Caco-2 (cell line): ENCODE measurements at regions of chr10 and their contacts with region 1.

Region 1: GRCh38 chr10:76547352-76547972 is 1090.1 kb downstream of the KCNMA1 start:
- DNase-seq: peak; percentile 78 to 87
- H3K4me3 ChIP-seq: no peak overlapping the region
- H3K4me3 Mint-ChIP-seq: no peak overlapping the region
- H3K27ac Mint-ChIP-seq: no peak overlapping the region
- H3K4me1 ChIP-seq: peaks cover 7% of the 10 kb centered on the region
- H3K4me1 Mint-ChIP-seq: peaks cover 7% of the 10 kb centered on the region
- H3K27me3 ChIP-seq: no peaks in the 10 kb centered on the region
- H3K27me3 Mint-ChIP-seq: no peaks in the 10 kb centered on the region
- CTCF ChIP-seq: peak; percentile 81 to 85

Region 2: DNA sequence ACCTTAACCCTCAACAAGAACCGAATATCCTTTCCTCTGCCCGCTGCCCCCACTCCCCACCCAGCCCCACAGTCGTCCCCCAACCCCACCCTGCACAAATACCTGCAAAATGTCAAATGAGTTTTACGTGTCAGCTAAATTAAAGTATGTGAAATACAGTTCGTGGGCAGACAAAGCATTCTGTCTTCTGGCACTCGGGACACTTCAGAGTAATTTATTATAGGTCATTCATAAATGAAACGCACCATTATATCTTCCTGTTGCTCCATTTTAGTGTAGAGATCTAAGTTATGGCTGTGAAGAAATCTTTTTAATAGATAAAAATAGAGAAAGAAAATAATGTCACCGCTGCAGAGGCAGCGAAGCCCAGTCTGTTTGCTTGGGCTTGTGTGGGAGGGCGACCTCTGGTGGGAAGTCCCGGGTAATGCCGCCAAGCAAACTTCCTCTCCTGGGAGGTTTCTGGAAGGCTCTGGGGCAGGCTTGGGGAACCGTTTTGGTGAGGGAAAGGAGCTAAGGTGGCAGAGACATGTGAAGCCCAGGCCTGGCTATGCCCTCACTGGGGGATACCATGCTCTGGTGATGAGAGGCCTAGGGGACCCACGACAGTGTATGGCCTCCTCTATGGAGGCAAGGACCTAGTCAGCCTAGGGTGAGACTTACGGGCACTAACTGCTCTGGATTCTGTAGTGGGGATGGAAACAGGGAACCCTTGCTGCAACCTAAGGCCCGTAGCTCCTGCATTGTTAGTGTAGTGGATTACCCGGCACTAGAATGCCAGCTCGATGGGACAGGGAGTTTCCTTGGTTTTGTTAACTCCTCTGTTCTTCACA is 511.1 kb before region 1 on chr10:
- CTCF ChIA-PET with region 1: no interaction called
- POLR2A ChIA-PET with region 1: no interaction called
- intact Hi-C with region 1: loop called (anchors 10 kb)
- DNase-seq: peak; percentile 56 to 66
- H3K4me3 ChIP-seq: no peak overlapping the region
- H3K4me3 Mint-ChIP-seq: no peak overlapping the region
- H3K27ac Mint-ChIP-seq: no peak overlapping the region
- H3K4me1 ChIP-seq: peaks cover 14% of the 10 kb centered on the region
- H3K4me1 Mint-ChIP-seq: peaks cover 21% of the 10 kb centered on the region
- H3K27me3 ChIP-seq: no peaks in the 10 kb centered on the region
- H3K27me3 Mint-ChIP-seq: no peaks in the 10 kb centered on the region
- CTCF ChIP-seq: peak; percentile 65 to 66

Region 3: DNA sequence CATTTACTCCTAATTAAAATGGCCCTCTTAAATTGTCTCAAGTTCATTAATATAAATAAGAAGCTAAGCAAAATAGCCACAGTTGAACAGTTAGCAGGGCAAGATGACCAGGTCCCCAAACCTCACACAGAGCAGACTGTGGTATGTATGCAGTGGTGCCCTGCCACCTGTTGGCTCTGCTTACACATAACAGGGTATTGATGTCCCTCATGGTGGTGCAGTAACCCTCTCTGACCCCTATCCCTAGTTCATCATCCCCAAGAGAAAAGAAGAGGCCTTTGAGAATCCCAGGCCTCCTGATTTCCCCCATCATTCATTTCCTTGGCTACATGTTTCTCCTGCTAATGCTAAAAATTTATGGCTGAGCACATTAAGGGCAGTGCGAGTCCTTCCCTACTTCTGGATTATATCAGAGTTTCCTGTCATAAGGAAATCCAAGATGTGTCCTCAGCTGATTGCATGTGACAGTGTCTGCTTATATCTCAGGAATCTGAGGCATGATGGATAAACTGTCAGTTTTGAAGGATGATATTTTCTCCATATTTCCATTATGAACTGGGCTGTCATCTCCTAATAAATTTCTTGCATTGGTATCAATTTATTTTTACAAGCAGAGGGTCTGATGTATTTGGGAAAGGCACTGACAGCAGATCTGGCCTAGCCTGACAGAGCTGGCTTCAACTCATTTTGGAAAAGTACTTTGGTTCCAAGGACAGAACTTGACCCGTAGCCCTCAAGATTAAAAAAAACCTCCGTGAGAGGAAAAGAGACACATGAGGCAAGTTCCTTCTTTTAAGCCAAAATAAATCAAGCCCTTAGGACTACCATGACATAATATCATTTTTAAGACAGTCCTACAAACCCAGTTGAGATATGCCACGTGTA is 235.5 kb before region 1 on chr10:
- CTCF ChIA-PET with region 1: no interaction called
- POLR2A ChIA-PET with region 1: no interaction called
- intact Hi-C with region 1: loop called (anchors 1 kb)
- DNase-seq: peak; percentile 61 to 67
- H3K4me3 ChIP-seq: no peak overlapping the region
- H3K4me3 Mint-ChIP-seq: no peak overlapping the region
- H3K27ac Mint-ChIP-seq: no peak overlapping the region
- H3K4me1 ChIP-seq: peaks cover 4% of the 10 kb centered on the region
- H3K4me1 Mint-ChIP-seq: no peaks in the 10 kb centered on the region
- H3K27me3 ChIP-seq: no peaks in the 10 kb centered on the region
- H3K27me3 Mint-ChIP-seq: no peaks in the 10 kb centered on the region
- CTCF ChIP-seq: peak; percentile 74 to 76

Region 4: DNA sequence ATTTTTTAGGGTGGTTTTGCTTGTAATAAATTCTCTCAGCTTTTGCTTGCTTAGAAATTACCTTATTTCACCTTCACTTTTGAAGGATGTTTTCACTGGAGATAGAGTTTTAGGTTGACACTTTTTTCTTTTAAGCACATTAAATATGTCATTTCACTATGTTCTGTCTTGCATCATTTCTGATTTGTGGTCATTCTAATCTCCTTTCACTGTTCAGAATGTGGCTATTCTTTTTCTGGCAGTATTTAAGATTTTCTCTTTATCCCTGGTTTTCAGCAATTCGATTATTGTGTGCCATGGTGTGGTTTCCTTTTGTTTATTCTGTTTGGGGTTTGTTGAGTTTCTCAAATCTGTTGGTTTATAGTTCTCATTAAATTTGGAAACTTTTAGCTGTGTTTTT is 24.6 kb after region 1 on chr10:
- CTCF ChIA-PET with region 1: no interaction called
- POLR2A ChIA-PET with region 1: no interaction called
- intact Hi-C with region 1: no loop called
- DNase-seq: no peak
- H3K4me3 ChIP-seq: no peak overlapping the region
- H3K4me3 Mint-ChIP-seq: no peak overlapping the region
- H3K27ac Mint-ChIP-seq: no peak overlapping the region
- H3K4me1 ChIP-seq: no peaks in the 10 kb centered on the region
- H3K4me1 Mint-ChIP-seq: no peaks in the 10 kb centered on the region
- H3K27me3 ChIP-seq: no peaks in the 10 kb centered on the region
- H3K27me3 Mint-ChIP-seq: peaks cover 3% of the 10 kb centered on the region
- CTCF ChIP-seq: no peak

Region 5: GRCh38 chr10:76984559-76985443 is 437.3 kb after region 1 on chr10:
- CTCF ChIA-PET with region 1: no interaction called
- POLR2A ChIA-PET with region 1: no interaction called
- intact Hi-C with region 1: loop called (anchors 2 kb)
- DNase-seq: peak; percentile 77 to 83
- H3K4me3 ChIP-seq: no peak overlapping the region
- H3K4me3 Mint-ChIP-seq: no peak overlapping the region
- H3K27ac Mint-ChIP-seq: no peak overlapping the region
- H3K4me1 ChIP-seq: no peaks in the 10 kb centered on the region
- H3K4me1 Mint-ChIP-seq: no peaks in the 10 kb centered on the region
- H3K27me3 ChIP-seq: no peaks in the 10 kb centered on the region; the same call in 1 of the 2 replicates
- H3K27me3 Mint-ChIP-seq: peaks cover 4% of the 10 kb centered on the region
- CTCF ChIP-seq: peak; percentile 94